SK-N-SH (cell line): ENCODE measurements at regions of chr13 and their contacts with region 1.

Region 1: GRCh38 chr13:57629821-57630235 is 1.7 kb upstream of the PCDH17 start:
- DNase-seq: peak; percentile 95
- H3K4me3 ChIP-seq: peak overlapping the region; percentile 51 to 70
- H3K27ac ChIP-seq: no peak overlapping the region
- H3K4me1 ChIP-seq: peaks cover 4 to 20% of the 10 kb centered on the region in 2 experiments; a peak in 1 of 4 replicates
- H3K27me3 ChIP-seq: peaks cover 35% of the 10 kb centered on the region
- CTCF ChIP-seq: no peak
- EP300 ChIP-seq: no peak
- RAD21 ChIP-seq: no peak; the same call in 1 of the 2 replicates

Region 2: DNA sequence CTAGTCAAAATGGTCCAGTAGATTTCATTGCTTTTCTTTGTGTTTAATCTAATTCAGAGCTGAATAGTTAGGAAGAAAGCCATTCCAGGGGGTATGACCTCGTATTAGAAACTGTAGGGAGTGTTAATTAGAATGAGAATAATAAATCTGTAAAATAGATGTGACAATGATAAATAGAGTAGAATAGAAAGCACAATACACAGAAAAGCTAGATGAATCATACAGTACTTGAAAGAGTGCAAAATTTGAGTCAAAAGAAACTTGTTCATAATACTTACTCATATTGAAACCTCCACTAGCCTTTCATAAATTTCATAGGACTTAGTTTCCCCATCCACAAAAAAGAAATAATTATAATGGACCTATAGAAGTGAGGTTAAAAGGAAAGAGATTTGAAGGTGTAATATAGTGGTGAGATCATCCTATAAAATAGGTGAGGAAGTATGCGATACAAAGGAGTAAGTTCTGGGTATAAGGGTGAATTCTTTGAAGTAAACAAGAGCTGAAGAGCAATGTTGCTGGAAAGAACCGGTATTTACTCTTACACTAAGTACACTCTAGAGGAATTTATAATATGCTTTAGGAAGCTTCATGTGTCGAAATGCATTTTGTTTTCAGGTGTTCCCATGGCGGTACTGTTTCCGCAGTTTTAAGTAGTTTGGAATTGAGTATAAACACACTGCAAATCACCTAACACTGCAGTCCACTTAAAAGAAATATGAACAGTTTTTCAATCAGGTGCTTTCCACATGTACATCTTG is 23.6 kb after region 1 on chr13:
- CTCF ChIA-PET with region 1: interaction called, 22 read pairs
- POLR2A ChIA-PET with region 1: no interaction called
- DNase-seq: no peak
- H3K4me3 ChIP-seq: no peak overlapping the region
- H3K27ac ChIP-seq: no peak overlapping the region
- H3K4me1 ChIP-seq: no peaks in the 10 kb centered on the region; a peak in 1 of 4 replicates
- H3K27me3 ChIP-seq: no peaks in the 10 kb centered on the region
- CTCF ChIP-seq: no peak
- EP300 ChIP-seq: no peak
- RAD21 ChIP-seq: no peak

Region 3: GRCh38 chr13:57857945-57858344 is 228.1 kb after region 1 on chr13:
- CTCF ChIA-PET with region 1: interaction called, 20 read pairs
- POLR2A ChIA-PET with region 1: no interaction called
- DNase-seq: no peak
- H3K4me3 ChIP-seq: no peak overlapping the region
- H3K27ac ChIP-seq: no peak overlapping the region
- H3K4me1 ChIP-seq: no peaks in the 10 kb centered on the region
- H3K27me3 ChIP-seq: no peaks in the 10 kb centered on the region
- CTCF ChIP-seq: no peak
- EP300 ChIP-seq: no peak
- RAD21 ChIP-seq: peak; percentile 49